HepG2 (cell line): ENCODE measurements at regions of chr11 and their contacts with region 1.

Region 1: DNA sequence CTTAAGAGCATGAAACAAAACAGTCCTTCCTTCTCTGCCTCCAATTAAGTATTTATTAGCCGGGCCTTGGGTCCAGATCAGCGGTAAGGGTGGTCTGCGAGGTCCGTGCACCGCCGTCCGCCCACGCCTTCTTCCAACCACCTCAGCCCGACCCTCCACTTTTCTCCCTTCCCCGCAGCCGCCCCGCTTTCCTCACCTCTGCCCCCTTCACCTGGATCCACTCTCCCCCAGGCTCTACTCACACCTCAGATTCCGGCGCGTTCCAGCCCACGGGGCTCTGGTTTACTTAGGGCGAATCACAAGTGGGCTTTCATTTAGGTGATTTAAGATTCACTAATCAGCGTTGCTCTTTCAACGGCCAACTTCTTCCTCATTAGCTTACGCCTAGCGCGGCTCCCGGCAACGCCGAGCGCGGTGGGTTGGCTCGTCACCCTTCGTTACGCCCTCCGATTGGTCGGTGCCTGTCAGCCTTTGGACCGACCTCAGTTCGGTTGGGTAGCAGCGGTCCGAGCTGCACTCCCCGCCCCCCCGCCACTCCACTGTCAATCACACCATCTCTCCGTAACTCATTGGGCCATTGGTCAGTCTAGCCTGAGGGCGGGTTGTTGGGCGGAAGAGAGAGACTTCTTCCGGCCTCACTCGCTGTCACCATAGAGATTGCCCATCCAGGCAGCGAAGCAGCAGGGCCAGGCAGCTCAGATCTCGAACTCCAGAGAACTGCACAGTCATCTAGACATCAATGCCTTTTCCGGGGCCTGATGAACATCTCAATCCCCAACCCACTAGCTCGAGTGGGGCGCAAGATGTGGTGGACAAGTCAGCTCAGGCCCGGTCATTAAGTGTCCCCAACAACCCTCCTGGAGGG is at the start of gene TMEM218:
- DNase-seq: peak; percentile 98
- ATAC-seq: peak; percentile 98
- H3K4me3 ChIP-seq: peak within 1 kb of the TSS; percentile 72 to 94 (median 84)
- H3K27ac ChIP-seq: peak within 1 kb of the TSS; percentile 79
- H3K4me1 ChIP-seq: peaks cover 14% of the 10 kb centered on the region
- H3K27me3 ChIP-seq: no peaks in the 10 kb centered on the region; a peak in 1 of 5 replicates
- CTCF ChIP-seq: no peak
- EP300 ChIP-seq: no peak
- POLR2A ChIP-seq: peak; percentile 52 to 76; a peak in 3 of 4 replicates
- RAD21 ChIP-seq: no peak
- total RNA-seq, gene TMEM218: 14.0 and 14.2 TPM in 2 replicates

Region 2: DNA sequence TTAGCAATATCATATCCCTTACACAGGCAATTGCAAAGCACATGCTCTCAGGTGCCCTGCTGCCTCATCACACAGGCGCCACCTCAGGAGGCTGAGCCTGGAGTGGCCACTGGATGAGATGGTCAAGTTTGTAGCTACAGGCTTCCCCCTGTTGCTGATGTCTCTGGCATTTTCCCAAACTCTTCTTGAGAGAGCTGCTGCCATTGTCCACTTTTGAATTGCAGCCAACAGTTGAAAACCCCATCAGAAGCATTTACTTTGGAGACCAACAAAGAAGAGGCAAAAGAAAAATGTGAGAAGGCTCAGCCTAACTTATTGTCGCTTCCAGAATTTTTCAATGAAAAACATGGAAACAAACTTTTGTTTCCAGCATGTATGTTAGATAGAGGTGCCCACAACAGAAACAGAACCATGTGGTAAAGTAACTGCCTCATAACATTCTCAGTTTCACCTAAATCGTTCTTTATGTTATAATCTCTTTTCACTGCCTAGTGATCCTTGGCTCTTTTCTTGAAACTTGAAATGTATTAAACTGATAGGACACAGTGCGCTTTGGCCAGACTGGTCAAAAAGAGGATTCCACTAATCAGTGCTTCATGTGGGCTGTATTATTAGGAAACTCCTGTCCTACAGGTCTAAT is 618.4 kb before region 1 on chr11:
- CTCF ChIA-PET with region 1: no interaction called
- POLR2A ChIA-PET with region 1: no interaction called
- in situ Hi-C with region 1: no loop called
- intact Hi-C with region 1: no loop called
- DNase-seq: no peak
- ATAC-seq: no peak
- H3K4me3 ChIP-seq: no peak overlapping the region
- H3K27ac ChIP-seq: no peak overlapping the region
- H3K4me1 ChIP-seq: no peaks in the 10 kb centered on the region
- H3K27me3 ChIP-seq: no peaks in the 10 kb centered on the region; a peak in 1 of 5 replicates
- CTCF ChIP-seq: no peak
- EP300 ChIP-seq: no peak
- POLR2A ChIP-seq: no peak
- RAD21 ChIP-seq: no peak

Region 3: DNA sequence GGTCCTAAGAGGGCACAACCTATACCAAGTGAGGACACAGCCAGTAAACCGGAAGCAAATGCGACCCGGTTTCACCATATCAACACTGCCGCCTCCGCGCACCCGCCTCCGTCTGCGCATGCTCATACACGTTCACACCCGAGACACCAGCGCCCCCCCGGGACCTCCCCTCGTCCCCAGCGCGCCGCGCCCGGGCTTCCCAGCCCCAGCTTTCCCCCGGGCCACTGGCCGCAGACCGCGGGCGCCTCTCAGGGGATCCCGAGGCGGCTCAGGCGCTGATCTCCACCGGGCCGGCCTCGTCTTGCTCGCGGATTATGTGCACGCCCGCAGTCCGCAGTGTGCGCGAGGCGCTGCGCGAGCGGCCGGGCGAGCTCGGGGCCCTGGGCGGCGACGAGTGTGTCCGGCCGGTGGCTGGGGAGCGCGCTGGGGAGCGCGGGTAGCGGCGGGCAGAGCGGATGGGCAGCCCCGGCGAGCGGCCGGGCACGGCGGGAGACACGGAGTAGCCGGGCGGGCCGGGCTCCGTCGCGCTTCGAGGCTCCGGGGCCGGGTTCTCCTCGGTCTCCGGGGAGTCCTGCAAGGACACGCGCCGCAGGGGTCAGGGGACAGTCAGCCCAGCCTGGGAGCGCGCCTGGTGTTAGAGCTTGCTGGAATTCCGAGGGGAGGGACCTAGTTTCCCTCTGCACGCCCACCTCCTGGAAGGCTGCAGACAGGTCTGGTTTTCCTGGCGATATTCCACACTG is 190.5 kb before region 1 on chr11:
- CTCF ChIA-PET with region 1: no interaction called
- POLR2A ChIA-PET with region 1: no interaction called
- in situ Hi-C with region 1: no loop called
- intact Hi-C with region 1: no loop called
- DNase-seq: no peak
- ATAC-seq: no peak
- H3K4me3 ChIP-seq: no peak overlapping the region
- H3K27ac ChIP-seq: no peak overlapping the region
- H3K4me1 ChIP-seq: peaks cover 19% of the 10 kb centered on the region
- H3K27me3 ChIP-seq: no peaks in the 10 kb centered on the region
- CTCF ChIP-seq: no peak
- EP300 ChIP-seq: no peak
- POLR2A ChIP-seq: no peak
- RAD21 ChIP-seq: no peak

Region 4: GRCh38 chr11:124961972-124962609 is 149.5 kb before region 1 on chr11:
- CTCF ChIA-PET with region 1: interaction called, 5 read pairs
- POLR2A ChIA-PET with region 1: interaction called, 4 read pairs
- in situ Hi-C with region 1: no loop called
- intact Hi-C with region 1: loop called (anchors 1 kb)
- DNase-seq: peak; percentile 78
- ATAC-seq: peak; percentile 93
- H3K4me3 ChIP-seq: no peak overlapping the region
- H3K27ac ChIP-seq: no peak overlapping the region
- H3K4me1 ChIP-seq: no peaks in the 10 kb centered on the region
- H3K27me3 ChIP-seq: no peaks in the 10 kb centered on the region
- CTCF ChIP-seq: peak; percentile 87
- EP300 ChIP-seq: no peak
- POLR2A ChIP-seq: no peak
- RAD21 ChIP-seq: peak; percentile 67

Region 5: DNA sequence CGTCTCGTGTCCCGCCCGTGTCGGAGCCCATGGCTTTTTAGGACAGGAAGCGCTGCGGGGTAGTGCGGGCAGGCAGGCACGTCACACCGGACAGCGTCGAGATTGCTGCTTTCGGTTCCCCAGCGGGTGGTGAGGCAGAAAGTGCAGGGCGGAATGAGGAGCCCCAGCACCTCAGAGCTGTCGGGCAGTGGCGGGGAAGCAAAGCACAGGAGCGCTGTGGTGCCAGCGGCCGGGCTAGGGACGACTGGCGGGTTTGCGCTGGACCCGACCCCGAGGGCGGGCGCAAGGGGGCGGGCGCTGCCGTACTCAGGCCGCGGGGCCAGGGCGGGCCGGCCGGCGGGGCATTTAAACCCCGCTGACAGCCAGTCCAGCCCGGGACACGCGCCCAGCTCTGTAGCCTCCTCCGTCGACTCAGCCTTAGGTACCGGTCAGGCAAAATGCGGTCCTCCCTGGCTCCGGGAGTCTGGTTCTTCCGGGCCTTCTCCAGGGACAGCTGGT is 48.6 kb before region 1 on chr11 and contains the start of gene SLC37A2:
- CTCF ChIA-PET with region 1: interaction called, 3 read pairs
- POLR2A ChIA-PET with region 1: no interaction called
- in situ Hi-C with region 1: no loop called
- intact Hi-C with region 1: loop called (anchors 1 kb)
- DNase-seq: peak; percentile 45
- ATAC-seq: peak; percentile 97
- H3K4me3 ChIP-seq: peak within 1 kb of the TSS; percentile 66 to 78 (median 72)
- H3K27ac ChIP-seq: no peak within 1 kb of the TSS
- H3K4me1 ChIP-seq: peaks cover 62% of the 10 kb centered on the region
- H3K27me3 ChIP-seq: no peaks in the 10 kb centered on the region; a peak in 1 of 5 replicates
- CTCF ChIP-seq: peak; percentile 62
- EP300 ChIP-seq: no peak
- POLR2A ChIP-seq: peak in 1 of 2 experiments; percentile 53; a peak in 2 of 4 replicates
- RAD21 ChIP-seq: peak; percentile 57; the same call in 1 of the 2 replicates
- total RNA-seq, gene SLC37A2: 1.8 and 4.6 TPM in 2 replicates

Region 6: DNA sequence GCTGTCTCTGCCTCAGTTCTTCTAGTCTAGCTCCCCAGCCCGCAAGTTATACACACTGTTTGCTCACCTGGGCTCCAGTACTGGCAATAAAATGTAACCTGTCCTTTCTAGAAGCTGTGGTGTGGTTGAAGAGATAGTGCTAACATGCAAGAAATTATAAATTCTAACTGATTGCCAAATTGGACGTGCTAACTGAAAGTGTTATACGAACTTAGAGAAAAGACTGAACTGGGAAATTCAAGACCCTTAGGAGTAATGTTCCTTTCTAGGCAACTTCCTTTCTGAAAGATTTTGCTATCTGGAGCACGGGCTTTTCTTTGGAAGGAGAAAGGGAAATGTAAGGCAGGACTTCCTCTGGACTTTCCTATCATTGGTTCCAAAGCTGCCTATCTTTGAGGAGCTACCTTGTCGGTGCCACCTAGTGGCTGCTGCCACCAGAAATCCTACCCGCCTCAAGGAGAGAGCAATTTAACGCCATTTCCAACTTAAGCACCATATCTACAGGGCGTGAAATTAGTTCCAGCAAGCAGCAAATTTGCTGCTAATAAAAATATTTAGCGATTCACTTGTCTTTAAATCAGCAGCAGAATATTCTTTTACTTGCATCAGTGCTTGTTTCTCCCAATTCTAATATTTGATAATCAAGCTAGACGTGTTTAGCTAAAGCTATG is 12.5 kb after region 1 on chr11:
- CTCF ChIA-PET with region 1: interaction called, 4 read pairs
- POLR2A ChIA-PET with region 1: interaction called, 36 read pairs
- in situ Hi-C with region 1: no loop called
- intact Hi-C with region 1: loop called (anchors 1 kb)
- DNase-seq: peak; percentile 73
- ATAC-seq: peak; percentile 99
- H3K4me3 ChIP-seq: peak overlapping the region; percentile 48 to 55 (median 53); a peak in 5 of 6 replicates
- H3K27ac ChIP-seq: no peak overlapping the region
- H3K4me1 ChIP-seq: peaks cover 16% of the 10 kb centered on the region
- H3K27me3 ChIP-seq: peaks cover 2 to 19% of the 10 kb centered on the region in 2 experiments; a peak in 2 of 5 replicates
- CTCF ChIP-seq: peak; percentile 75
- EP300 ChIP-seq: no peak
- POLR2A ChIP-seq: no peak
- RAD21 ChIP-seq: no peak

Region 7: GRCh38 chr11:125153837-125154236 is 42.3 kb after region 1 on chr11:
- CTCF ChIA-PET with region 1: no interaction called
- POLR2A ChIA-PET with region 1: no interaction called
- in situ Hi-C with region 1: no loop called
- intact Hi-C with region 1: no loop called
- DNase-seq: no peak
- ATAC-seq: no peak
- H3K4me3 ChIP-seq: no peak overlapping the region
- H3K27ac ChIP-seq: no peak overlapping the region
- H3K4me1 ChIP-seq: no peaks in the 10 kb centered on the region
- H3K27me3 ChIP-seq: peaks cover 0 to 15% of the 10 kb centered on the region in 2 experiments; a peak in 3 of 5 replicates
- CTCF ChIP-seq: no peak
- EP300 ChIP-seq: no peak
- POLR2A ChIP-seq: no peak
- RAD21 ChIP-seq: no peak